SK-N-SH (cell line): ENCODE measurements at regions of chr1 and their contacts with region 1.

Region 1: GRCh38 chr1:166910396-166910994 is 34.4 kb upstream of the TADA1 start:
- DNase-seq: peak; percentile 71
- H3K4me3 ChIP-seq: no peak overlapping the region; a peak in 1 of 4 replicates
- H3K27ac ChIP-seq: no peak overlapping the region
- H3K4me1 ChIP-seq: no peaks in the 10 kb centered on the region
- H3K27me3 ChIP-seq: no peaks in the 10 kb centered on the region
- CTCF ChIP-seq: peak; percentile 79
- EP300 ChIP-seq: no peak
- RAD21 ChIP-seq: peak; percentile 91

Region 2: DNA sequence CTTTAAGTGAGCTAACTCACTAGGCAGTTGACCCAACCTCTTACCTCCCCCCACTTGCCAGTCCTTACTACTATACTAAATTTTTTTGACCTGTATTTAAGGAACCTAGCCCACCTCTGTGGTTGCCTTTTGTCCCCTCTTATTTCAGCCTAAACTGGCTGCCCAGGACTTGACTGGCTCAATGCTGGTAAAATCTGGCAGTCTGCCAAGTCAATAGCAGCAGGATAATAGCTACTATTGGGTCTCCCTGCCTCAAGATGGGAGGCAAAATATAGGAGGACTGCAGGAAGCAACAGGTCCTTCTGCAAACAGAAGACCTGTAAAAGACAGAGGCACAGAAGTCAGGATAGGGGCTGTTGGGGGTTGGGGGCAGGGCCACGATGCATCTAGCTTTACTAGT is 215.4 kb before region 1 on chr1:
- CTCF ChIA-PET with region 1: no interaction called
- POLR2A ChIA-PET with region 1: no interaction called
- DNase-seq: no peak
- H3K4me3 ChIP-seq: no peak overlapping the region
- H3K27ac ChIP-seq: no peak overlapping the region
- H3K4me1 ChIP-seq: no peaks in the 10 kb centered on the region
- H3K27me3 ChIP-seq: no peaks in the 10 kb centered on the region
- CTCF ChIP-seq: no peak
- EP300 ChIP-seq: no peak
- RAD21 ChIP-seq: no peak

Region 3: GRCh38 chr1:166920561-166921475 is 10.3 kb after region 1 on chr1:
- CTCF ChIA-PET with region 1: interaction called, 45 read pairs
- POLR2A ChIA-PET with region 1: no interaction called
- DNase-seq: peak; percentile 47
- H3K4me3 ChIP-seq: no peak overlapping the region
- H3K27ac ChIP-seq: no peak overlapping the region
- H3K4me1 ChIP-seq: no peaks in the 10 kb centered on the region; a peak in 1 of 4 replicates
- H3K27me3 ChIP-seq: peaks cover 44% of the 10 kb centered on the region
- CTCF ChIP-seq: no peak
- EP300 ChIP-seq: no peak
- RAD21 ChIP-seq: no peak

Region 4: DNA sequence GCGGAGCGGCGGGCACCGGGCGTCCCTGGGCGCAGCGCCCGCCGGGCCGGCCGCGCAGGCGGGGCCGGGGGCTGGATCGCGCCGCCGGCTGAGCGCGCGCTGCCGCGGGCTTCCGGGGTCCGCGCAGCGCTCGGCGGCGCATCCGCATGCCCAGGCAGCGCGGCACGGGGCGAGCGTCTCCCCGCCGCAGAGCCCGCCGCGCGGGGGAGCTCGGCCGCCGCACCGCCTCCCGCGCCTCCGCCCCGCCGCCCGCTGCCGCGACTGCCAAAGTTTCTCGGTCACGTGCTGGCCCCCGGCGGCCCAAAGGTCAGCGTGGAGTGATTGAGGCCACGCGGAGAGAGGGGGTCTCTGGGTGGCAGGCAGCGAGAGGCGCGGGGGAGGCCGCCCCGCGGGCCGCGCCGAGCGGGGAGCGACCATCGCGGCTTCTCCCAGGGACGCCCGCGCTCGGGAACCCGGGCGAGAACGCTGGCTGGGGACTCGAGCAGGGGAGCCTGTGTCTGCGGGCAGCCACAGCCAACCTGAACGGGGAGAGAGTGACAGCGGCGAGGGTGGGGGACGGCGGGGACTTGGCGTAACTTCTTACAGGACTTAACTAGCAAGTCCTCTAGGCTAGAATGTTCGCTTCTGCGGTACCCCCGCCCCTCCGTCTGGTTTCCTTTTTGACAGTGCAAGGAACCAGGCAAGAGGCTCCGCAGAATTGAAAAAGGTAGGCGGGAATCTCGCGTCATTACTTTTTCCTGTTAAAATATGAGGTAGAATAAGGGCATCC is 65.0 kb after region 1 on chr1 and contains the start of gene ILDR2:
- CTCF ChIA-PET with region 1: interaction called, 17 read pairs
- POLR2A ChIA-PET with region 1: no interaction called
- DNase-seq: peak; percentile 78
- H3K4me3 ChIP-seq: peak within 1 kb of the TSS; percentile 55 to 74
- H3K27ac ChIP-seq: no peak within 1 kb of the TSS
- H3K4me1 ChIP-seq: peaks cover 0 to 7% of the 10 kb centered on the region in 2 experiments; a peak in 1 of 4 replicates
- H3K27me3 ChIP-seq: peaks cover 51% of the 10 kb centered on the region
- CTCF ChIP-seq: no peak
- EP300 ChIP-seq: no peak
- RAD21 ChIP-seq: no peak
- polyA plus RNA-seq, gene ILDR2: 0.05 and 0.24 TPM in 2 replicates

Region 5: DNA sequence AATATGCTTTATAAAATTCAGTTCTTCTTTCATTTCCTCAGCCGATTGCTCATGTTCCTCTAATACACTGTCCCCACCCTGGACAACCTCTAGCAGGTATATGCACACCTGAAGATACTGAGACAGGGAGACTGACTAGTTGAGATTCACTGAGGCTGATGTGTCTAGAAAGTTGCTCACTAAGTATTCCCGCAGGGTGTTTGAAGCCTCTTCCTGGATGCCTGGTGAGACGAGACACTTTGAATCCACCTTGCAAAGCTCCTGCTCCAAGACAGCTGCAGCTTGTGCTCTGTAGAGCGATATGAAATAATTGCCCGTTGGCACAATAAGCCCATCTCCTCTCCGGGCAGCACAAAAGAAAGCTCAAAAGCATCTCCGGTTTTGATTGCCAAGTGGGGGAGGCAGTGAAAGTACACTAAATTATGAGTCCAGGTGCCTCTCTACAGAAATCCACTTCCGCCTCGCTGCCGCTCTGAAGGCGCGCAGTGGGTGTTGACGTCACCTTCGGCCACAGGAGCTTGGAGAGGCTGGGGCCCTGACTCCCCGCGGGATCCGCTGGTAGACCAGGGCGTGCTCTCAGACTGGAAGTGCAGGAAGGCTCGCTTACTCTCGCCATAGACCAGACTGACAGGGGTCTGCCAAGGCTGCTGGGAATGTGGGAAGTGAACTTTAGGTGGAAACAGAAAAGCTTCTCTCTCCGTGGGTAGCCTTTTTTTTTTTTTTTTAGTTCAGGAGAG is 133.4 kb after region 1 on chr1:
- CTCF ChIA-PET with region 1: interaction called, 769 read pairs
- POLR2A ChIA-PET with region 1: no interaction called
- DNase-seq: peak; percentile 67
- H3K4me3 ChIP-seq: peak overlapping the region; percentile 42 to 45; a peak in 3 of 4 replicates
- H3K27ac ChIP-seq: no peak overlapping the region
- H3K4me1 ChIP-seq: peaks cover 0 to 5% of the 10 kb centered on the region in 2 experiments; a peak in 1 of 4 replicates
- H3K27me3 ChIP-seq: no peaks in the 10 kb centered on the region; the same call in 1 of the 2 replicates
- CTCF ChIP-seq: no peak
- EP300 ChIP-seq: no peak
- RAD21 ChIP-seq: no peak

Region 6: GRCh38 chr1:167553136-167554027 is 642.9 kb after region 1 on chr1 and contains the start of gene CREG1:
- CTCF ChIA-PET with region 1: interaction called, 14 read pairs
- POLR2A ChIA-PET with region 1: no interaction called
- DNase-seq: peak; percentile 98
- H3K4me3 ChIP-seq: peak within 1 kb of the TSS; percentile 67 to 71
- H3K27ac ChIP-seq: peak within 1 kb of the TSS in 1 of 2 experiments; percentile 51; a peak in 2 of 4 replicates
- H3K4me1 ChIP-seq: peaks cover 0 to 8% of the 10 kb centered on the region in 2 experiments; a peak in 2 of 4 replicates
- H3K27me3 ChIP-seq: no peaks in the 10 kb centered on the region
- CTCF ChIP-seq: no peak
- EP300 ChIP-seq: no peak
- RAD21 ChIP-seq: no peak
- polyA plus RNA-seq, gene CREG1: 26.1 and 37.0 TPM in 2 replicates